ENCODE measurements at regions of chr21 and their contacts with region 1.

Region 1: GRCh38 chr21:35543746-35544145 is 494.6 kb upstream of the RUNX1 start:
- DNase-seq: no peak
- ATAC-seq: no peak
- H3K4me3 Mint-ChIP-seq: no peak overlapping the region
- H3K27ac Mint-ChIP-seq: no peak overlapping the region
- H3K4me1 Mint-ChIP-seq: peaks cover 2% of the 10 kb centered on the region
- H3K27me3 Mint-ChIP-seq: peaks cover 2% of the 10 kb centered on the region

Region 2: GRCh38 chr21:34881894-34882371 is 661.8 kb before region 1 on chr21:
- CTCF ChIA-PET with region 1: no interaction called
- POLR2A ChIA-PET with region 1: interaction called, 12 read pairs
- intact Hi-C with region 1: no loop called
- DNase-seq: no peak
- ATAC-seq: peak; percentile 70
- H3K4me3 Mint-ChIP-seq: peak overlapping the region; percentile 92
- H3K27ac Mint-ChIP-seq: peak overlapping the region; percentile 91
- H3K4me1 Mint-ChIP-seq: peaks cover 67% of the 10 kb centered on the region
- H3K27me3 Mint-ChIP-seq: no peaks in the 10 kb centered on the region

Measured in activated CD4-positive, alpha-beta T cell treated with anti-CD3 and anti-CD28 coated beads for 36 hours (primary cell).